ENCODE measurements at regions of chr16 and their contacts with region 1.

Region 1: GRCh38 chr16:66650707-66651473 is 45.7 kb downstream of the CMTM4 start:
- DNase-seq: peak; percentile 28
- ATAC-seq: peak; percentile 99
- H3K4me3 ChIP-seq: no peak overlapping the region
- H3K27ac ChIP-seq: no peak overlapping the region
- H3K4me1 ChIP-seq: no peaks in the 10 kb centered on the region
- H3K27me3 ChIP-seq: no peaks in the 10 kb centered on the region; a peak in 1 of 4 replicates
- CTCF ChIP-seq: peak; percentile 89 to 92 (median 90)
- EP300 ChIP-seq: no peak
- POLR2A ChIP-seq: no peak
- RAD21 ChIP-seq: peak; percentile 43; the same call in 1 of the 2 replicates

Region 2: GRCh38 chr16:66635406-66635805 is 15.5 kb before region 1 on chr16:
- CTCF ChIA-PET with region 1: interaction called, 10 read pairs
- POLR2A ChIA-PET with region 1: no interaction called
- RAD21 ChIA-PET with region 1: no interaction called
- SMC1A ChIA-PET with region 1: no interaction called
- in situ Hi-C with region 1: no loop called
- intact Hi-C with region 1: no loop called
- DNase-seq: no peak
- ATAC-seq: no peak
- H3K4me3 ChIP-seq: no peak overlapping the region
- H3K27ac ChIP-seq: no peak overlapping the region
- H3K4me1 ChIP-seq: no peaks in the 10 kb centered on the region
- H3K27me3 ChIP-seq: peaks cover 0 to 1% of the 10 kb centered on the region in 2 experiments; a peak in 2 of 4 replicates
- CTCF ChIP-seq: no peak
- EP300 ChIP-seq: no peak
- POLR2A ChIP-seq: no peak
- RAD21 ChIP-seq: no peak

Region 3: GRCh38 chr16:66690106-66690847 is 39.4 kb after region 1 on chr16:
- CTCF ChIA-PET with region 1: no interaction called
- POLR2A ChIA-PET with region 1: no interaction called
- RAD21 ChIA-PET with region 1: no interaction called
- SMC1A ChIA-PET with region 1: no interaction called
- in situ Hi-C with region 1: no loop called
- intact Hi-C with region 1: no loop called
- DNase-seq: no peak
- ATAC-seq: no peak
- H3K4me3 ChIP-seq: no peak overlapping the region
- H3K27ac ChIP-seq: no peak overlapping the region
- H3K4me1 ChIP-seq: no peaks in the 10 kb centered on the region
- H3K27me3 ChIP-seq: peaks cover 0 to 2% of the 10 kb centered on the region in 2 experiments; a peak in 1 of 4 replicates
- CTCF ChIP-seq: no peak
- EP300 ChIP-seq: no peak
- POLR2A ChIP-seq: no peak
- RAD21 ChIP-seq: no peak